CD4-positive, alpha-beta T cell (primary cell): ENCODE measurements at regions of chr4 and their contacts with region 1.

Region 1: DNA sequence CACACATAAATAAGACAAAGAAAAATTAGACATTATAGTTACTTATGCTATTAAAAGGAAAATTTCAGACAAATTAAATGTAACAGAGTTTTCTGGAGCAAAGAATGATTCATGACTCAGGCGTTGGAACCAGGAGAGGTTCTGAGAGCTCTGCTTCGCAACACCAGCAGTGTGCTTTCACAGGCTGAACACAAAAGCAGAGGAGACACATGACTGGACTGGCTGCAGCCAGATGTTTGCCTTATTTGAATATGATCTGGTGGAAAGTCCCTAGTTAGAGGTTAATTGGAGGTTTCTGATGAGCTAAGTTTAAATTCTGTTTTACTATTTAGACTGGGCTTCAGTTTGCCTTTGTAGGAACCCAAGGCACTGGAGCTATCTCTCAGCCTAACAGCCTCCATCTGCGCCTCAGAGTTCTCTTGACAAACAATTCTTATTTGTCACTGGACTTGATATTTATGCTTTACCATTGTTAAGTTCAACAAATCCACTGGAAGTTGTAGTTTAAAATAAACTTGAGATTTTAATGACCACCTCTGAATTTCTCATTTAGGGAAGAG is 16.2 kb downstream of the BOD1L1 start:
- DNase-seq: no peak
- ATAC-seq: no peak
- H3K4me3 ChIP-seq: no peak overlapping the region
- H3K4me3 Mint-ChIP-seq: no peak overlapping the region
- H3K27ac ChIP-seq: no peak overlapping the region
- H3K27ac Mint-ChIP-seq: no peak overlapping the region
- H3K4me1 ChIP-seq: no peaks in the 10 kb centered on the region
- H3K4me1 Mint-ChIP-seq: peaks cover 12% of the 10 kb centered on the region
- H3K27me3 ChIP-seq: no peaks in the 10 kb centered on the region
- H3K27me3 Mint-ChIP-seq: no peaks in the 10 kb centered on the region
- CTCF ChIP-seq: no peak

Region 2: DNA sequence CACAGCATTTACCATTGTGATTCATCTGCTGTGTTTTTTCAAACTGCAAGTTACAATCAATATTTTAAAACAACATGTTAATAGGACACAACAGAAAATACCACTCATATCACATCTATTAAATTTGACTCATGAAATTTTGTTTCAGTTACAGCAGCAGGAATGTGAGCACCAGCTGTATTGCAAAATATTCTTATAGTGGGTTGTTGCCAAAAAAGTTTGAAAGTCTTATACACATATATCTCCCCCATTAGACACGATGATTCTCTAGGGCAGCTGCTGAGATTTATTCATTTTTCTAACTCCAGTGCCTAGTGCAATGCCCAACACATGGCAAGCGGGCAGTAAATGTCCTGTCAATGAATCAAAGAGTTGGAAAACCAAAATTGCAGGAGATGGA is 40.4 kb before region 1 on chr4:
- CTCF ChIA-PET with region 1: no interaction called
- POLR2A ChIA-PET with region 1: no interaction called
- intact Hi-C with region 1: no loop called
- DNase-seq: no peak
- ATAC-seq: no peak
- H3K4me3 ChIP-seq: no peak overlapping the region
- H3K4me3 Mint-ChIP-seq: no peak overlapping the region
- H3K27ac ChIP-seq: no peak overlapping the region
- H3K27ac Mint-ChIP-seq: no peak overlapping the region
- H3K4me1 ChIP-seq: no peaks in the 10 kb centered on the region
- H3K4me1 Mint-ChIP-seq: no peaks in the 10 kb centered on the region
- H3K27me3 ChIP-seq: no peaks in the 10 kb centered on the region
- H3K27me3 Mint-ChIP-seq: no peaks in the 10 kb centered on the region
- CTCF ChIP-seq: no peak

Region 3: DNA sequence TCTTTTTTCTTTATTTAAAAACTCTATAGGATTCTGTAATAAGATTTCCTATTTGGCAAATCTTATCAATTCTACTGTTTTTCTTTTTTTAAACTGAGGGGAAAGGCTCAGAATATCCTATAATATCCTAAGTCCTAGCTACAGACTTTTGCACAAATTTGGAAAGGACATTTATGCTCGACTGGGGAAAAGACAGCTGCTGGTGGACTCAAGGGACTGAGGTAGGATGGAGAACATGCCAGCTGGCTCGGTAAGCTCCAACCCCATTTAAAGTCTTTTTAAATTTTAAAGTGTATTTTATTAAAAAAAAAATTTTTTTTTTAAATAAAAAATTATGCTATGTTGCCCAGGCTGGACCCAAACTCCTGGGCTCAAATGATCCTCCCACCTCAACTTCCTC is 20.6 kb before region 1 on chr4:
- CTCF ChIA-PET with region 1: no interaction called
- POLR2A ChIA-PET with region 1: no interaction called
- intact Hi-C with region 1: loop called in 1 of 2 experiments (anchors 2 kb)
- DNase-seq: no peak
- ATAC-seq: no peak
- H3K4me3 ChIP-seq: no peak overlapping the region
- H3K4me3 Mint-ChIP-seq: no peak overlapping the region
- H3K27ac ChIP-seq: no peak overlapping the region
- H3K27ac Mint-ChIP-seq: no peak overlapping the region
- H3K4me1 ChIP-seq: no peaks in the 10 kb centered on the region
- H3K4me1 Mint-ChIP-seq: no peaks in the 10 kb centered on the region
- H3K27me3 ChIP-seq: no peaks in the 10 kb centered on the region
- H3K27me3 Mint-ChIP-seq: no peaks in the 10 kb centered on the region
- CTCF ChIP-seq: no peak